Activated naive CD4-positive, alpha-beta T cell treated with anti-CD3 and anti-CD28 coated beads, Interleukin-2, amount 10 ng/mL, durations not matched to agents 7 days and 5 days (primary cell): ENCODE measurements at regions of chr12 and their contacts with region 1.

Region 1: GRCh38 chr12:50132505-50133135 is 20.6 kb downstream of the COX14 start:
- DNase-seq: no peak
- H3K4me3 Mint-ChIP-seq: no peak overlapping the region
- H3K27ac Mint-ChIP-seq: peak overlapping the region; percentile 9
- H3K4me1 Mint-ChIP-seq: no peaks in the 10 kb centered on the region
- H3K27me3 Mint-ChIP-seq: no peaks in the 10 kb centered on the region

Region 2: GRCh38 chr12:50077910-50078680 is 54.5 kb before region 1 on chr12:
- CTCF ChIA-PET with region 1: no interaction called
- DNase-seq: no peak
- H3K4me3 Mint-ChIP-seq: no peak overlapping the region
- H3K27ac Mint-ChIP-seq: no peak overlapping the region
- H3K4me1 Mint-ChIP-seq: no peaks in the 10 kb centered on the region
- H3K27me3 Mint-ChIP-seq: peaks cover 31% of the 10 kb centered on the region

Region 3: GRCh38 chr12:50111693-50112455 is 20.7 kb before region 1 on chr12 and contains the start of gene COX14:
- CTCF ChIA-PET with region 1: interaction called, 19 read pairs
- DNase-seq: peak; percentile 99
- H3K4me3 Mint-ChIP-seq: peak within 1 kb of the TSS; percentile 93
- H3K27ac Mint-ChIP-seq: peak within 1 kb of the TSS; percentile 98
- H3K4me1 Mint-ChIP-seq: peaks cover 42% of the 10 kb centered on the region
- H3K27me3 Mint-ChIP-seq: peaks cover 4% of the 10 kb centered on the region

Region 4: DNA sequence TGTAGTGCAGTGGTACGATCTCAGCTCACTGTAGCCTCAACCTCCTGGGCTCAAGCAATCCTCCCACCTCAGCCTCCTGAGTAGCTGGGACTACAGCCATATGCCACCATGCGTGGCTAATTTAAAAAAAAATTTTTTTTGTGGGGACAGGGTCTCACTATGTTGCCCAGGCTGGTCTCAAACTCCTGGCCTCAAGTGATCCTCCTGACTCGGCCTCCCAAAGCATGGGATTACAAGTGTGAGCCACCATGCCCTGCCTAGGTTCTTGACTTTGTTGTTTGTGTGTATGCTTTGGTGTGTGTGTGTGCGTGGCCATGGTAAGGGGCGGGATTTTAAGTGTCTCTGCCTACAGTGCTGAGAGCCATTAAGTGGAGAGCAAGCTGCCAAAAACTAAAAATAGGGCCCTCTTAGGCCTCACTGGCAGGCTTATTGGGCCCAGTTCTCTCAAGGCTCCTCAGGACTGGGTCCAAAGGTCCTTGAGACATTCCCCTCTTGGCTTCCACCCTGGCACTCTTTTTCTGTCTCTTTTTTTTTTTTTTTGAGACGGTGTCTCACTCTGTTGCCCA is 15.5 kb before region 1 on chr12:
- CTCF ChIA-PET with region 1: interaction called, 19 read pairs
- DNase-seq: no peak
- H3K4me3 Mint-ChIP-seq: no peak overlapping the region
- H3K27ac Mint-ChIP-seq: no peak overlapping the region
- H3K4me1 Mint-ChIP-seq: peaks cover 29% of the 10 kb centered on the region
- H3K27me3 Mint-ChIP-seq: no peaks in the 10 kb centered on the region

Region 5: GRCh38 chr12:50151047-50151687 is 18.5 kb after region 1 on chr12:
- CTCF ChIA-PET with region 1: interaction called, 12 read pairs
- DNase-seq: no peak
- H3K4me3 Mint-ChIP-seq: no peak overlapping the region
- H3K27ac Mint-ChIP-seq: no peak overlapping the region
- H3K4me1 Mint-ChIP-seq: peaks cover 4% of the 10 kb centered on the region
- H3K27me3 Mint-ChIP-seq: no peaks in the 10 kb centered on the region

Region 6: DNA sequence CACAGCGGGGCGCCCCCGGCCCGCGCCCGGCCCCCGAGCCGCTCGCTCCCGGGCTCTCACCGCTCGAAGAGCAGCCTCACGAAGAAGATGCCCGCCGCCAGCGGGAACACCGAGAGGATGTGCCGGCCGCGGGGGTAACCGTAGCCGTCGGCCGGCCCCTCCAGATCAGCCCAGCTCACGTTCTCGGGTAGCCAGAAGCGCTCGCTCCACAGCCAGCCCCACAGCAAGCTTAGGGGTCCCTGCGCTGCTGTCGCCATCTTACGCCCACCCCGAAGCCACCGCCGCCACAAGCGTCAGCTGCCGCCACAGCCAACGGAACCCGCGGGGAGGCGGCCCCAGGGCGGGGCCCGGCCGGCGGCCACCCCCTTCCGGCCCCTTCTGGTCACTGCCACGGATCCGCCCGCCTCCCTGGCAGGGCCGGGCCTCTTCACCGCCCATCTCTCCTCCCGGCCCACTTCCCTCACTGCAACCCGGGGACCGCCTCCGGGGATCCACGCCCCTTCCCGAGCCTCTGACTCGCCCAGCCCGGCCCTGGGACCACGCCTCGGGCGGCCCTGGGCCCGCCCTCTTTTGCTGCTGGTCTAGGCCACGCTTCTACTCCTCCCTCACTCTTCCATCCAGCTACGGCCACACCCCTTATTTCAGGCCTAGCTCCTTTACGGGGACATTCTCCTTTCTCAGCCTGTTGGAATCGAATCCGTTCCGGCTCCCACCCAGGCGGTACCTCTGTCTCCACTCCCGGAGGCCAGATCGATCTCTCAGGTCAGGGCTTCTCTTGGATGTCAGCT is 34.6 kb after region 1 on chr12 and contains the start of gene CERS5:
- CTCF ChIA-PET with region 1: interaction called, 14 read pairs
- DNase-seq: peak; percentile 99
- H3K4me3 Mint-ChIP-seq: peak within 1 kb of the TSS; percentile 95
- H3K27ac Mint-ChIP-seq: peak within 1 kb of the TSS; percentile 90
- H3K4me1 Mint-ChIP-seq: peaks cover 37% of the 10 kb centered on the region
- H3K27me3 Mint-ChIP-seq: no peaks in the 10 kb centered on the region

Region 7: GRCh38 chr12:50174971-50175715 is 42.5 kb after region 1 on chr12:
- CTCF ChIA-PET with region 1: interaction called, 24 read pairs
- DNase-seq: no peak
- H3K4me3 Mint-ChIP-seq: no peak overlapping the region
- H3K27ac Mint-ChIP-seq: peak overlapping the region; percentile 4
- H3K4me1 Mint-ChIP-seq: peaks cover 1% of the 10 kb centered on the region
- H3K27me3 Mint-ChIP-seq: no peaks in the 10 kb centered on the region

Region 8: GRCh38 chr12:50314629-50315312 is 182.2 kb after region 1 on chr12:
- CTCF ChIA-PET with region 1: interaction called, 15 read pairs
- DNase-seq: no peak
- H3K4me3 Mint-ChIP-seq: no peak overlapping the region
- H3K27ac Mint-ChIP-seq: no peak overlapping the region
- H3K4me1 Mint-ChIP-seq: no peaks in the 10 kb centered on the region
- H3K27me3 Mint-ChIP-seq: no peaks in the 10 kb centered on the region